Posterior cingulate gyrus (tissue), 11 donors: ENCODE measurements at regions of chr11 and their contacts with region 1.

Region 1: DNA sequence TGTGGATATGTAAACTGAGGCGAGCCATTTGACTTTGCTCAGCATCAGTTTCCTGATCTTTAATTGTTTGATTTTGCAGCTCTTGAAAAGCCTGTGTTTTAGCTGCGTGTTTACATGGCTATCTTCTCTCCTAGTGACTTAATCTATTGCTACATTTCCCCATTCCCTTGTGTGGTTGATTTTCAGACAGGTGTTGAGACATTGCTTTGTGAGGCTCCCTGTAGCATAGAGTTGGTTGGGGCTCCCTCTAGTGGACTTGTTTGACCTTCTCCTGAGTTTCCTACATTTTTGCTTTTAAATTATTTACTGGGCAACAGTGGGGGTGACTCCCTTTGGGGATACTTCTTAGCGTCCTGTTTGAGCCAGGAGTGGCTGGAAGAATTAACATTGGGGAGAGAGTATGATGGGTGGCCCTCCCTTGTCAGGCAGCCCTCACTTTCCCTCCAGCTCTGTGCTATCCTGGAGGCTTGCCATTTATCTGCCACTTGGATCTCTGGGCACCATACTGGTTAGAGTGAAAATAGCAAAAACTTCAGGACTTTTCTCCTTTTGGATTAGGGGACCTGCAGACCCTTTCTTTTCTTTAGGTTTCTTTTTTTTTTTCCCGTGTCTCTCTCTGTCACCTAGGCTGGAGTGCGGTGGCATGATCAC is 9.2 kb upstream of the CBL start:
- DNase-seq: peak in 5 of 10 donors; percentile 24 to 52 (median 37)

Region 2: DNA sequence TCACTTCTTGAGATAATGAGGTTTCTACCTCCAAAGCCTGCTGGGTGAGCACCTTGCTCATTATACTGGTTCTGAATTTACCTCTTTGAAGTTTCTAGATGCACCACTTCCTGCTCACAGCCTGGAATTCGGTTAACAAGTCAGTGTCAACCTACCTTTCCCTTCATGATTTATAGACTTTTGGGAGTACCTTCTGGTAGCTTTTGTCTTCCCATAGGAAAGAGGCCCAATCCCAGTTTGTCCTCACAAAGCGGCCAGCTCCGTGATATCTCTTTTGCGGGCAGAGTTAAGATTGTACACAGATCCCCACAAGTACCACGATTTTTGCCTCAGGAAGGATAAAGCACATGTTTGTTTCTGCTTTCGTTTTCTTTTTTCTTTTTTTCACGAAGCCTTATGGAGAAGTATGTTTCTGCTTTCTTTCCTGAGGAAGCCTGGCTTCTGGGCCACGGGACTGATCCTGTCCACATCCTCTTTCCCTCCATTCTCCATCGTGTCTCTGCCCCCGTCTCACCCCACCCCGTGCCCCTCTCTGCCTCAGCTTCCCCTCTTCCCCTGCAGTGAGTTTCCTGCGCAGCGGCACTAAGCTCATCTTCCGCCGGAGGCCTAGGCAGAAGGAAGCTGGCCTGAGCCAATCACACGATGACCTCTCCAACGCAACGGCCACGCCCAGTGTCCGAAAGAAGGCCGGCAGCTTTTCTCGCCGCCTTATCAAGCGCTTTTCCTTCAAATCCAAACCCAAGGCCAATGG is 81.3 kb before region 1 on chr11:
- intact Hi-C with region 1: loop called (anchors 10 kb)
- DNase-seq: peak in 2 of 10 donors; percentile 37 to 89

Region 3: DNA sequence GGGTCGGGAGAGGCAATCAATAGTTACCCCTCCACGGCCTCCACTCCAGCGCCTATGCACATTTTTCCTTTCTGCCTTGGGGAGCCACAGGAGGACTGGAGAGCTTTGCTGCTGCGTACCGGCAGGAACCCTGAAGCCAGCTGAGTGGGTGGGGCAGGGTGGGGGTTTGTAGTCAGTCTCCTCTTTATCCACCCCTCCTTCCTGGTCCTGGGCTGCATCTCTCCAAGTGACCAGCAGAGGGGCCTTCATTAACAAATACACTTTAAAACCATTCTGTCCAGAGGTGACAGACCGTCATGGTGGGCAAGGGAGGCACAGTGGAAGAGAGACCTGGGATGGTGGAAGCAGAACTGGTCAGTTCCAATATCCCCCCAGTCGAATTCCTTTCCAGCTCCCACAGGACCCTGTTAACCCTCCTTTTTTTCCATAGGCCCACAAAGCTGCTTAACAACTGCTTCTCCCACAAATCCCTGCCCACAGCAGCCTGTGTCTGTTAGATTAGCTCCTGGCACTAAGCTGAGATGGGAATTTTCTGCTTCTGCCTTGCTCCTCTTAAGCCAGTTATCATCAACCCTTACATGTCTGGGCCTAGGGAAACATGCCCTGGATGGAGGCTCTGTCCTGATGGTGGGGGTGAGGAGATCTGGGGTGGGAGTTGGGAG is 52.0 kb before region 1 on chr11:
- intact Hi-C with region 1: loop called (anchors 10 kb)
- DNase-seq: peak in 5 of 10 donors; percentile 38 to 88 (median 45)

Region 4: DNA sequence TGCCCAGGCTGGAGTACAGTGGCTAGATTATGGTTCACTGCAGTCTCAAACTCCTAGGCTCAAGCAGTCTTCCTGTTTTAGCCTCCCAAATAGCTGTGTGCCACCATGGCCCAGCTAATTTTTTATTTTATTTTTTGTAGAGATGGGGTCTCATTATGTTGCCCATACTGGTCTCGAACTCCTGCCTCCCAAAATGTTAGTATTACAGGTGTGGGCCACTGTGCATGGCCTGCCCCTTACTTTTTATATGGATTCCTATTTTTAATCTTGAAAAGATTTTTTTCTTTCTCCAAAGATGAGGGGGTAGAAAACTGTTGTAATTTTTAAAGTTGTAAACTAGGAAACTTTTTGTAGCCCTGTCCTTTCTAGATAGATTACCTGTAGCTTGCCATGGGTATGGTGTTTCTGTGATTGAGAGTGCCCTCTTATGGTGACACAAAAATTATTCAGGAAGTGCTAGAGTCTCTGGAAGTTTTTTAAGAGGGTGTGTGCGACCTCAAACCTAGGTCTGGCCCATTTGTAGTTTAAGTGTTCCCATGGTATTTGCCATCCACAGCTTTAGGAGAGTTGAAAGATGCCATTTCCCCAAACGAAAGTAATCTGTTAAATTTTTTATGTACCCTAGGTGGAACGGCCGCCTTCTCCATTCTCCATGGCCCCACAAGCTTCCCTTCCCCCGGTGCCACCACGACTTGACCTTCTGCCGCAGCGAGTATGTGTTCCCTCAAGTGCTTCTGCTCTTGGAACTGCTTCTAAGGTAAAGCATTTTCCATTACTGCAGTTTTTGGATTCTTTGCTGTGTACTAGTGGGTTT is 87.6 kb after region 1 on chr11:
- intact Hi-C with region 1: no loop called
- DNase-seq: no peak